K562 (cell line): ENCODE measurements at regions of chr1 and their contacts with region 1.

Region 1: GRCh38 chr1:203673550-203674427 is 47.2 kb downstream of the ATP2B4 start:
- DNase-seq: peak; percentile 79 to 92 (median 86)
- ATAC-seq: peak; percentile 93
- H3K4me3 ChIP-seq: no peak overlapping the region
- H3K27ac ChIP-seq: peak overlapping the region; percentile 77
- H3K4me1 ChIP-seq: peaks cover 22 to 34% of the 10 kb centered on the region in 2 experiments
- H3K27me3 ChIP-seq: no peaks in the 10 kb centered on the region
- CTCF ChIP-seq: peak; percentile 49 to 74 (median 58)
- EP300 ChIP-seq: peak; percentile 71
- POLR2A ChIP-seq: no peak; the same call in none of the 2 replicates
- RAD21 ChIP-seq: peak; percentile 55 to 70

Region 2: GRCh38 chr1:203520315-203520714 is 153.5 kb before region 1 on chr1:
- CTCF ChIA-PET with region 1: no interaction called
- POLR2A ChIA-PET with region 1: no interaction called
- in situ Hi-C with region 1: no loop called
- intact Hi-C with region 1: no loop called
- DNase-seq: no peak
- ATAC-seq: no peak
- H3K4me3 ChIP-seq: no peak overlapping the region
- H3K27ac ChIP-seq: no peak overlapping the region
- H3K4me1 ChIP-seq: no peaks in the 10 kb centered on the region; a peak in 1 of 5 replicates
- H3K27me3 ChIP-seq: peaks cover 60 to 91% of the 10 kb centered on the region in 2 experiments
- CTCF ChIP-seq: no peak
- EP300 ChIP-seq: no peak
- POLR2A ChIP-seq: no peak
- RAD21 ChIP-seq: no peak

Region 3: GRCh38 chr1:203661572-203661971 is 12.2 kb before region 1 on chr1:
- CTCF ChIA-PET with region 1: no interaction called
- POLR2A ChIA-PET with region 1: interaction called, 11 read pairs
- in situ Hi-C with region 1: no loop called
- intact Hi-C with region 1: no loop called
- DNase-seq: no peak
- ATAC-seq: no peak
- H3K4me3 ChIP-seq: no peak overlapping the region
- H3K27ac ChIP-seq: no peak overlapping the region
- H3K4me1 ChIP-seq: peaks cover 3 to 15% of the 10 kb centered on the region in 2 experiments; a peak in 4 of 5 replicates
- H3K27me3 ChIP-seq: no peaks in the 10 kb centered on the region
- CTCF ChIP-seq: no peak
- EP300 ChIP-seq: no peak
- POLR2A ChIP-seq: no peak
- RAD21 ChIP-seq: no peak

Region 4: DNA sequence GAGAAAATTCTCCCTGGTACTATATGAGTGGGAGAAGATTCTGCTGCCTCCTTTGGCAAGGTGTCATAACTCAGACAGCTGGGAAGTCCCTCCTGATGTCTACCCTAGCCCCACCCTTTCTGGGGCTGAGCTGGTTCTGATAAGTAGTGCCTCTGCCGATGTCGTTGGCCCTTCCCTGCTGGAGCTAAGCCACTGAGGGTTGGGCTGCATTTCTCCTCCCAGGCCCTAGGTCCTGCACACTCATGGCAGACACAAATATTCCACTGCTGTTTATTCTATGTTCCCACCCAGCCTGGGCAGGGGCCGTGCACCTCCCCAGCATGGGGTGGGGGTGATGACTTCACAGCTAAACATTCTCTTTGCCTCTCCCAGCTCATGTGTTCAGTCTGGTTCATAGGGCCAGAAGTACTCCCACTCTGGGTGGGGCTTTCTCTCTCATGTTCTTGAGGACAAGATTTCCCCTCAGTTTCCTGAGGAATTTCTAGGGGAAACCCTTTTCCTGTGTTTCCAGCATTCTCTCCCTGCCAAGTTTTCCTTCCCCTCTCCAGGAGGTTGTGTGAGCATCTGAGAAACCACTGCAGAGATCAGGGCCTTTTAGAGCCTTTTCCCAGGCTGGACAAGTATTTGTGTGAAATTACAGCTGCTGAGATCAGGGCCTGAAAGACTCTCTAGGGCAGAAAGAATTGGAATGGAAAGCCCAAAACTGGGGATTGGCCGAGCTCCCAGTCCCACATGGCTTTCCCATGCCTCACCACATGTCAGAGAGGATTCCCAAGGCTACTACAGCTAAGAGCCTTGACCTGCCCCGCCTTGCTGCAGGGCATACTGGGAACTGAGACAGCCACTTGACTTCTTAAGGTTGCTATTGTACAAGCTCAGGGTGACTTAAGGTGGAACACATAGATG is 19.0 kb after region 1 on chr1:
- CTCF ChIA-PET with region 1: no interaction called
- POLR2A ChIA-PET with region 1: interaction called, 4 read pairs
- in situ Hi-C with region 1: no loop called
- intact Hi-C with region 1: loop called (anchors 2 kb)
- DNase-seq: peak; percentile 83 to 93 (median 85)
- ATAC-seq: peak; percentile 93
- H3K4me3 ChIP-seq: no peak overlapping the region
- H3K27ac ChIP-seq: peak overlapping the region; percentile 67
- H3K4me1 ChIP-seq: peaks cover 19 to 31% of the 10 kb centered on the region in 2 experiments; a peak in 4 of 5 replicates
- H3K27me3 ChIP-seq: no peaks in the 10 kb centered on the region
- CTCF ChIP-seq: no peak
- EP300 ChIP-seq: peak; percentile 67; the same call in 1 of the 2 replicates
- POLR2A ChIP-seq: 0 out of 2 replicates have a peak, but pooled peaks have one; percentile 39
- RAD21 ChIP-seq: peak in 1 of 2 experiments; percentile 27; a peak in 2 of 4 replicates

Region 5: GRCh38 chr1:203765029-203765837 is 91.4 kb after region 1 on chr1 and contains the start of gene LAX1:
- CTCF ChIA-PET with region 1: no interaction called
- POLR2A ChIA-PET with region 1: no interaction called
- in situ Hi-C with region 1: no loop called
- intact Hi-C with region 1: no loop called
- DNase-seq: peak in 2 of 4 experiments; percentile 14 to 26
- ATAC-seq: peak; percentile 42
- H3K4me3 ChIP-seq: no peak within 1 kb of the TSS
- H3K27ac ChIP-seq: no peak within 1 kb of the TSS
- H3K4me1 ChIP-seq: peaks cover 4 to 12% of the 10 kb centered on the region in 2 experiments; a peak in 4 of 5 replicates
- H3K27me3 ChIP-seq: peaks cover 10 to 12% of the 10 kb centered on the region in 2 experiments; a peak in 4 of 5 replicates
- CTCF ChIP-seq: no peak
- EP300 ChIP-seq: no peak
- POLR2A ChIP-seq: no peak
- RAD21 ChIP-seq: no peak
- polyA plus RNA-seq, gene LAX1: not detected

Region 6: DNA sequence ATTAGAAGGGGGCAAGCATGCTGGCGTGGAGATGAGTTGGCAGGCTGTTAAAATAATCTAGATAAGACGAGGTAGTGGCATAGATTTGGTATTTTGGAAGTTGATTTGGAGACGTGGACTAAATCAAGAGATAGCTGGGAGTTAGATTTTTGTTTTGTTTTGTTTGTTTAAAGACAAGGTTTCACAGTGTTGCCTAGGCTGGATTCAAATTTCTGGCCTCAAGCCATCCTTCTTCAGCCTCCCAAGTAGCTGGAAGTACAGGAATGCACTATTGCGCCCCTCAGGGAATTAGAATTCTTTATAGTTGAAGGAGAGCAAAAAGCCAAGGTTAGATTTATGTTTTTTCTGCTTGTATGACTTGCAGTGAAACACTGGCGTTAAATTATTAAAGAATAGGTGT is 165.3 kb after region 1 on chr1:
- CTCF ChIA-PET with region 1: no interaction called
- POLR2A ChIA-PET with region 1: no interaction called
- in situ Hi-C with region 1: no loop called
- intact Hi-C with region 1: no loop called
- DNase-seq: no peak
- ATAC-seq: no peak
- H3K4me3 ChIP-seq: no peak overlapping the region
- H3K27ac ChIP-seq: no peak overlapping the region
- H3K4me1 ChIP-seq: no peaks in the 10 kb centered on the region
- H3K27me3 ChIP-seq: no peaks in the 10 kb centered on the region
- CTCF ChIP-seq: no peak
- EP300 ChIP-seq: no peak
- POLR2A ChIP-seq: no peak
- RAD21 ChIP-seq: no peak

Region 7: GRCh38 chr1:204714861-204715511 is 1041.2 kb after region 1 on chr1:
- CTCF ChIA-PET with region 1: no interaction called
- POLR2A ChIA-PET with region 1: no interaction called
- in situ Hi-C with region 1: no loop called
- intact Hi-C with region 1: no loop called
- DNase-seq: peak in 1 of 4 experiments; percentile 38
- ATAC-seq: peak; percentile 39; the same call in 2 of the 3 replicates
- H3K4me3 ChIP-seq: no peak overlapping the region
- H3K27ac ChIP-seq: peak overlapping the region; percentile 2; the same call in 1 of the 3 replicates
- H3K4me1 ChIP-seq: peaks cover 16 to 45% of the 10 kb centered on the region in 2 experiments
- H3K27me3 ChIP-seq: no peaks in the 10 kb centered on the region
- CTCF ChIP-seq: peak; percentile 29 to 53 (median 51); a peak in 4 of 6 replicates
- EP300 ChIP-seq: no peak
- POLR2A ChIP-seq: no peak
- RAD21 ChIP-seq: peak; percentile 25 to 51; a peak in 2 of 4 replicates